Activated CD4-positive, alpha-beta memory T cell treated with anti-CD3 and anti-CD28 coated beads, Interleukin-2, amount 10 ng/mL, durations not matched to agents 7 days and 5 days (primary cell): ENCODE measurements at regions of chr6 and their contacts with region 1.

Region 1: DNA sequence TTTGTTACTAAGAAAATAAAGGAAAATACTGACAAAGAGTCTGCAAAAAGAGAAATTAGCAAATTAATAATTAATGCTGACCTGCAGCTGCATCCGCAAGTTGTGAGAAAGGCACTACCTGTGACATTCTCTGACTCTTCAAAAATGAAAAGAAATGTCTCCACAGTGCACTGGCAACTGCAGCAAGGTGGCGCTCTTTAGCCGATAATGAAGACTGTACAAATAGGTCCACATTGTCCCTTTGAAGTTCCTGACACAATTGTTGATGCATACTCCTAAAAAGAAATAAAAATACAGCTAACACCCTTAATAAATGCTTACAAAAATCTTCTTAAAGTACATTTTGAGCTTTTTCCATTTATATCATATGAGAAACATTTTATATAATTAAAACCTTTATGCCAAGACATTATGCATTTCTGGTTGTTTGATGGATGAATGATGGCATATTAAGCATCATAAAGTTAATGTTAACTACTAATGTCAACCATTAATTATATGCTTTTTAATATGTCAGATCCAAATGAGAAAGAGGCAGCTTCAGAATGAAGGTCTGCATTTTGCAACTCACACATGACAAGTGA is 96.5 kb downstream of the MMS22L start:
- DNase-seq: peak; percentile 66
- H3K4me3 Mint-ChIP-seq: no peak overlapping the region
- H3K27ac Mint-ChIP-seq: no peak overlapping the region
- H3K4me1 Mint-ChIP-seq: no peaks in the 10 kb centered on the region
- H3K27me3 Mint-ChIP-seq: no peaks in the 10 kb centered on the region

Region 2: DNA sequence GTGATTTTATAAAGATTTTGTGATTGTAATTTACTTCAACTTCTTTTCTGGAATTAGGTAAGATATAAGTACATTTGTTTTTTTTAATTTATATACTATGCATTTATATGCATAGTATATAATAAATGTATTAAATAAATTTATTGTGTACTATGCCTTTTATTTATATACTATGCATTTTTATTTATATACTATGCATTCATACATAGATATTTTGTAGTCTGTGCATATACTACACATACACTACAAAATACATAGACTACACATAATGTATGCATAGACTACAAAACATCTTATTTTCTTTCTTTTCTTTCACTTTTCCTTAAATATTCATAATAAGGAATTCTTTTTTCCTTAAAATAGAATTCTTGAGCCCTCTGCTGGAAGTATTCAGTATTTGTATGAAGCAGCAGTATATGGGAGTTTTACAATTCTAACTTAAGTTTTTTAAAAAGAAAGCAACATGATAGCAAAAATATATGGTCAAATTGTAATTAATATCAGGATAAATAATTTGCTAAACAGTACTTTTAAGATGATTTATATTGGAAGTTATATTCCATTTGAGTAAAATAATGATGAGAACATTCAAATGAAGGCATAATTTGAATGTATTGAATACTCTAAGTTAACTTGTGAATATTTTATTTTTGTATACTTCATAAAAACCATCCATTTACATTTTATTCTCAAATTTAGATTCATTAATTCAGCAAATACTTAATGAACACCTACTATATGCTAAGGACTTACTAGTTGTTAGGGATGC is 132.7 kb before region 1 on chr6:
- CTCF ChIA-PET with region 1: no interaction called
- POLR2A ChIA-PET with region 1: no interaction called
- DNase-seq: no peak
- H3K4me3 Mint-ChIP-seq: no peak overlapping the region
- H3K27ac Mint-ChIP-seq: no peak overlapping the region
- H3K4me1 Mint-ChIP-seq: peaks cover 10% of the 10 kb centered on the region
- H3K27me3 Mint-ChIP-seq: no peaks in the 10 kb centered on the region

Region 3: GRCh38 chr6:97175806-97176205 is 10.7 kb before region 1 on chr6:
- CTCF ChIA-PET with region 1: interaction called, 11 read pairs
- POLR2A ChIA-PET with region 1: no interaction called
- DNase-seq: no peak
- H3K4me3 Mint-ChIP-seq: no peak overlapping the region
- H3K27ac Mint-ChIP-seq: no peak overlapping the region
- H3K4me1 Mint-ChIP-seq: no peaks in the 10 kb centered on the region
- H3K27me3 Mint-ChIP-seq: no peaks in the 10 kb centered on the region

Region 4: GRCh38 chr6:97198046-97198565 is 11.6 kb after region 1 on chr6:
- CTCF ChIA-PET with region 1: interaction called, 11 read pairs
- POLR2A ChIA-PET with region 1: no interaction called
- DNase-seq: no peak
- H3K4me3 Mint-ChIP-seq: no peak overlapping the region
- H3K27ac Mint-ChIP-seq: no peak overlapping the region
- H3K4me1 Mint-ChIP-seq: no peaks in the 10 kb centered on the region
- H3K27me3 Mint-ChIP-seq: no peaks in the 10 kb centered on the region

Region 5: DNA sequence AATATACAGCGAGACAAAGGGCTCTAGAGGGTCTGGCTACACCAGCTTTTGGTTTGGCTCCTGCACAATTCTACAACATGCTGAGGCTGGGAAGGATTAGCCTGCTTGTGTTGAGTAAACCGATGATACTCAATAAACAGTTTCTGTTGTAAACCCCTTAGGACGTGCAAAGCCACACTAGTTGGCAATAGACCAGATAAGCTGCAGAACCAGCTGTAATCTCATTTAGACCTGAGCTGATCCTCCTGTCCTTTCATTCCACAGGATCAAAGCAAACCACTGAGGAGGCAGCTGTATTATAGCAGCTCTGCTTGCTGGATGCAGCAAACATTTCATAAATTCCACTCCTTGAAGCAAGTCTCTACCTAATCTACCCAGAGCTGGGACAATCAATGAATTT is 16.8 kb after region 1 on chr6:
- CTCF ChIA-PET with region 1: interaction called, 11 read pairs
- POLR2A ChIA-PET with region 1: no interaction called
- DNase-seq: no peak
- H3K4me3 Mint-ChIP-seq: no peak overlapping the region
- H3K27ac Mint-ChIP-seq: no peak overlapping the region
- H3K4me1 Mint-ChIP-seq: no peaks in the 10 kb centered on the region
- H3K27me3 Mint-ChIP-seq: no peaks in the 10 kb centered on the region

Region 6: GRCh38 chr6:97222903-97223302 is 36.4 kb after region 1 on chr6:
- CTCF ChIA-PET with region 1: no interaction called
- POLR2A ChIA-PET with region 1: no interaction called
- DNase-seq: no peak
- H3K4me3 Mint-ChIP-seq: no peak overlapping the region
- H3K27ac Mint-ChIP-seq: no peak overlapping the region
- H3K4me1 Mint-ChIP-seq: no peaks in the 10 kb centered on the region
- H3K27me3 Mint-ChIP-seq: no peaks in the 10 kb centered on the region

Region 7: DNA sequence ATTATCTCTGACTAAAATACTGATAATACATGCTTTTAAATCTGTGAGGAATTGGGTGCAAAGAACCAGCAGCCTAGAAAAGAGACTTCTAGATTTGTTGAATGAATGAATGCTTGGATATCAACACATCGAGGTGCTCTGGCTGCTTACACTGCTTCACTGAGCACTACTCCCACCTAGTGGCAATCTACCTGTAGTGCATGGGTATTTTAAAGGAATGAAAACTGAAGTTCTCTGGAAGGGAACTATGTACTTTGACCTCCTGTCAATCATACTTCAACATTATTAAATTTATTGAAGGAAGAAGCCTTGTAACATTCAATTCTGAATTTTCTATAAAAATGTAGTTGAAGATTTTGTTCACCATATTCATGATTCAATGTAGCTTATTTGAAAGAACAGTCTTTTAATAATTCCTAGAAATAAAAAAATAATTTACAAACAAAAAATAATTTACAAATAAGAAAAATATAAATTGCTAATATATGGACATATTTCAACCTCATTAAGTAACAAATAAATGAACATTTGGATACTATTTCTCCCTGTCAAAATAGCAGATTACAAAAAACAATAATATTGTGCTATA is 207.7 kb after region 1 on chr6:
- CTCF ChIA-PET with region 1: interaction called, 11 read pairs
- POLR2A ChIA-PET with region 1: no interaction called
- DNase-seq: peak; percentile 42
- H3K4me3 Mint-ChIP-seq: no peak overlapping the region
- H3K27ac Mint-ChIP-seq: no peak overlapping the region
- H3K4me1 Mint-ChIP-seq: no peaks in the 10 kb centered on the region
- H3K27me3 Mint-ChIP-seq: peaks cover 15% of the 10 kb centered on the region